Sigmoid colon (tissue), 7 donors: ENCODE measurements at regions of chr12 and their contacts with region 1.

Region 1: GRCh38 chr12:122965851-122966722 is at the start of gene ABCB9:
- DNase-seq: peak; percentile 95
- H3K4me3 ChIP-seq: peak within 1 kb of the TSS; percentile 39 to 61 (median 56)
- H3K27ac ChIP-seq: peak within 1 kb of the TSS; percentile 57 to 73 (median 66)
- H3K4me1 ChIP-seq: peaks cover 0 to 40% (median 30%) of the 10 kb centered on the region in 4 donors
- H3K27me3 ChIP-seq: no peaks in the 10 kb centered on the region
- CTCF ChIP-seq: no peak
- EP300 ChIP-seq: no peak
- POLR2A ChIP-seq: peak in 1 of 2 donors; percentile 40
- total RNA-seq, gene ABCB9: 1.6 to 3.8 (median 2.8) TPM

Region 2: GRCh38 chr12:122871851-122872780 is 94.0 kb before region 1 on chr12:
- intact Hi-C with region 1: no loop called
- DNase-seq: peak; percentile 76
- H3K4me3 ChIP-seq: peak overlapping the region in 3 of 4 donors; percentile 23 to 33 (median 31)
- H3K27ac ChIP-seq: peak overlapping the region; percentile 71 to 84 (median 76)
- H3K4me1 ChIP-seq: peaks cover 0 to 47% (median 40%) of the 10 kb centered on the region in 4 donors
- H3K27me3 ChIP-seq: no peaks in the 10 kb centered on the region
- CTCF ChIP-seq: no peak
- EP300 ChIP-seq: no peak
- POLR2A ChIP-seq: no peak

Region 3: GRCh38 chr12:122895705-122896636 is 70.1 kb before region 1 on chr12 and contains the start of gene VPS37B:
- intact Hi-C with region 1: loop called (anchors 5 kb)
- DNase-seq: peak; percentile 91
- H3K4me3 ChIP-seq: peak within 1 kb of the TSS; percentile 65 to 97 (median 82)
- H3K27ac ChIP-seq: peak within 1 kb of the TSS; percentile 77 to 84 (median 83)
- H3K4me1 ChIP-seq: peaks cover 0 to 41% (median 34%) of the 10 kb centered on the region in 4 donors
- H3K27me3 ChIP-seq: no peaks in the 10 kb centered on the region
- CTCF ChIP-seq: no peak
- EP300 ChIP-seq: peak in 1 of 4 donors; percentile 28
- POLR2A ChIP-seq: peak; percentile 71 to 78
- total RNA-seq, gene VPS37B: 8.6 to 17.2 (median 15.3) TPM

Region 4: DNA sequence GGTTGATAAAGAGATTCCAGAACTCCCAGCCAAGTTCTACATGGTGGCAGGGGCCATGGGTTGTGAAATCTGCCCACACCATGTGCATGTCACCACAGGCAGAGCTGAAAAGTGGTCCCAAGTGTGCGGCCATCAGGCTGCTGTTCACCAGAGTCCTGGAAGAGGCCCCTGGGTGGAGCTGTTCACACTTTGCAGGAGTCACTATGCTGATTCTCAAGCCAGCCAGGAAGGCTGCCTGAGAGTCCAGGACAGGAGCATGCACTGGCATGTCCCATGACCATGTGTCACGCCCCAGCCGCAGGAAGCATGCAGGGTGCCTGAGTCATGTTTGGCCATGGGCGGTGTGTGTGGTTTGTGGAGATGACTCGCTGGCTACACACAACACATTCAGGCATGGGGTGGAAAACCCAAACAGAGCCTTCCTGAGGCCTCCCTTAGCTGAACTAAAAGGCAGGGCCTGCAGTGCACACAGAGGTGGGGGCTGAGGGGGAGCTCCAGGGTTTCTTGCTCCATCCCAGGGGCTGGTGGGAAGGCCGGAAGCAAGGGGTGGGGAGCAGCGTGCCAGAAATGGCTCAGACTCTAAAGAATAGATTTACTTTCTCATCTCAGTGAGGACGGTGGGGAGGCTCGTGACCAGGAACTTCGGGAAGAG is 19.3 kb before region 1 on chr12:
- intact Hi-C with region 1: no loop called
- DNase-seq: peak; percentile 94
- H3K4me3 ChIP-seq: no peak overlapping the region
- H3K27ac ChIP-seq: peak overlapping the region; percentile 44 to 71 (median 50)
- H3K4me1 ChIP-seq: peaks cover 0 to 20% (median 3%) of the 10 kb centered on the region in 4 donors
- H3K27me3 ChIP-seq: no peaks in the 10 kb centered on the region
- CTCF ChIP-seq: no peak
- EP300 ChIP-seq: no peak
- POLR2A ChIP-seq: no peak